Esophagus muscularis mucosa (tissue), 4 donors: ENCODE measurements at regions of chr14 and their contacts with region 1.

Region 1: DNA sequence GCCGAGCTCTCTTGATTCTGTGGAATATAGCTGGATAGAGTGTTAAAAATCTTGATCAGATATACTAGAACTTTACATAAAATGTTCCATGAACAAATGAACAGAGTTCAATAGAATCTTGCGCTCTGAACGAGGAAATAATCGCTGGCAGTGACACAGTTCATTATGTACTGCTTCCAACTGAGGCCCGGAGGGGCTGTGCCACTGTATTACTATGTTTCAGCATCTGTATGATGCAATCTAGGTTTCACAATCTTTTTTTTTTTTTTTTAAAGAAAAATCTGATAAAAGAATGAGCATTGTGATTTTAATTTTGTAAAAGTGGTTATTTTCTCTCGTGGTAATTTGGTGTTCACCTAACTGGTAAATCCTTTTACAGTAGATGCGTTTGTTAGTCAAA is 77.2 kb downstream of the FERMT2 start:
- DNase-seq: no peak
- H3K4me3 ChIP-seq: no peak overlapping the region
- H3K27ac ChIP-seq: peak overlapping the region in 2 of 4 donors; percentile 3 to 5
- H3K4me1 ChIP-seq: peaks cover 20 to 44% (median 37%) of the 10 kb centered on the region in 4 donors
- H3K27me3 ChIP-seq: no peaks in the 10 kb centered on the region
- CTCF ChIP-seq: no peak
- EP300 ChIP-seq: no peak
- POLR2A ChIP-seq: no peak

Region 2: GRCh38 chr14:52950898-52951689 is 77.4 kb after region 1 on chr14 and contains the start of gene FERMT2:
- intact Hi-C with region 1: loop called (anchors 10 kb)
- DNase-seq: peak; percentile 94
- H3K4me3 ChIP-seq: peak within 1 kb of the TSS; percentile 86 to 95 (median 92)
- H3K27ac ChIP-seq: peak within 1 kb of the TSS; percentile 99 to 100 (median 99)
- H3K4me1 ChIP-seq: peaks cover 11 to 73% (median 60%) of the 10 kb centered on the region in 4 donors
- H3K27me3 ChIP-seq: no peaks in the 10 kb centered on the region
- CTCF ChIP-seq: no peak
- EP300 ChIP-seq: no peak
- POLR2A ChIP-seq: peak; percentile 75
- total RNA-seq, gene FERMT2: 293 to 397 (median 370) TPM